OCI-LY7 (cell line): ENCODE measurements at regions of chr5 and their contacts with region 1.

Region 1: GRCh38 chr5:9507974-9508373 is 37.9 kb downstream of the SEMA5A start:
- DNase-seq: no peak
- H3K4me3 ChIP-seq: no peak overlapping the region
- H3K27ac ChIP-seq: no peak overlapping the region
- H3K4me1 ChIP-seq: no peaks in the 10 kb centered on the region
- CTCF ChIP-seq: no peak

Region 2: DNA sequence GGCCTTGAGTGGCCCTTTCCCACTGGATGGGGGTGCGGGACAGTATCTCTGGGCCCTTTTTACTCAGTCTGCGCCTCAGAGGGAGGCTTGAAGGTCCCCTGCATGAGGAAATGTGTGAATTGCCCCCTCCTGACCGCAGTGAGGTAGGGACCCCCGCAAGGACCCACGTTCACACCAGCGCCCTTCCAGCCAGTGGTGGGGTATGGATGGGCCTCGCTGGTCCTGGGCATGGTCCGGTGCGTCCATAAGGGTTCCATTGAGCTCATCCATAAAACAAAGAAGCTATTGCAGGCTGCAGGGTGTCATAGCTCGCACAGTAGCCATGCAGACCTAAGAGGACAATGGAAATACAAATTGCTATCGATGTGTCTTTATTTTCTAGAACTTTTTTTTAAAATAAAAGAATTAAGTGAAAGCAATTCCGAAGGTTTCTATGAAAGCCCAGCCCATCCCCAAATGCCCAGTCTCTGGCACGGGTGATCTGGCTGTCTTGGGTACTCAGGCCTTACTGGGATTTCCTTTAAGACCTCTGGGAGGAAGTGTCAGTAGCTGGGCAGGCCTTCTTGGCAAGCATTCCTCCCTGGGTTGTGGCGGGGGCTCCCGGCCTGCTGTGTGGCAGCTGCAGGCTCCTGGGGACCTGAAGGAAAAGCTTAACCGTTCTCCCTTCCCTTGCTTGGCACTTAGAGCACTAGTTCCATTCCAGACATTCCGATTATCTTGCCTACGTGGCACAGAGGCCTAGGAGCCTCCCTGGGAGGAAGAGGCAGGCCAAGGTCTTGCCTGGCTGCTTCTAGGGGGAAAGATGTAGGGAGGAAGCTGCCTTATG is 39.4 kb after region 1 on chr5:
- CTCF ChIA-PET with region 1: no interaction called
- POLR2A ChIA-PET with region 1: no interaction called
- intact Hi-C with region 1: no loop called
- DNase-seq: no peak
- H3K4me3 ChIP-seq: no peak overlapping the region
- H3K27ac ChIP-seq: no peak overlapping the region
- H3K4me1 ChIP-seq: no peaks in the 10 kb centered on the region
- CTCF ChIP-seq: no peak

Region 3: DNA sequence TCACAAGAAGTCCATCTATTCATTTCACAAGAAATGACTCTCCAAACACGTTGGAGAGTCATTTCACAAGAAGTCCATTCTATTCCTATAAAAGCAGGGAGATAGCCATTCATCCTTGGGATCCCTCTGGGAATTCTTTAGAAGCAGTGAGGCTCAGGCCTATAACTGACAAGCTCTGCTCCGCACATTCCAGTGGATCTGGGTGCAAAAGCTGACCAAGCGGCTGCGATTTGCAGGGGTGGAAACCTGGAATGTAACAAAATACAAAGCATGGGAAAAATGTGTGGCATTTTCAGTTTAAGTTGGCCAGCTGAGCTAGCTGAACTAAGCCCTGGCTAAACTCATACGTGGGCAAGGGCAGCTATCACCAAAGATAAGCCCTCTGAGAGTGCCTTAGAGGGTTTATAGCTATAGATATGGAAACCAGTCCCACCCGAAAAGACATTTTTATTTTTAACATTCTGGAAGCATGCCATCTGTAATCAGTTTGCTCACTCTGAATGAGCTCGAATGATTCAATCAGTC is 113.5 kb after region 1 on chr5:
- CTCF ChIA-PET with region 1: no interaction called
- POLR2A ChIA-PET with region 1: no interaction called
- intact Hi-C with region 1: no loop called
- DNase-seq: no peak
- H3K4me3 ChIP-seq: no peak overlapping the region
- H3K27ac ChIP-seq: no peak overlapping the region
- H3K4me1 ChIP-seq: no peaks in the 10 kb centered on the region
- CTCF ChIP-seq: no peak

Region 4: DNA sequence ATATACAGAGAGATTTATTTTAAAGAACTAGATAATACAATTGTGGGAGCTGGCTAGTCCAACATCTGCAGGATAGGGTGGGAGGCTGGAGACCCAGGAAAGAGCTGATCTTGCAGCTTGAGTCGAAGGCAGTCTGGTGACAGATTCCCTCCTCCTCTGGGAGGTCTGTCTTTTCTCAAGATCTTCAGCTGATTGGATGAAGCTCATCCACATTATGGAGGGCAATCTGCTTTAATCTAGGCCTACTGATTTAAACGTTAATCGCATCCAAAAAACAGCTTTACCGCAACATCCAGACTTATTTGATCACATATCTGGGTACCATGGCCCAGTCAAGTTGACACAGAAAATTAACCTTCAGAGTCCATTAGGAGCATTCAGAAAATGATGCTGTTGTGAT is 573.6 kb after region 1 on chr5:
- CTCF ChIA-PET with region 1: no interaction called
- POLR2A ChIA-PET with region 1: no interaction called
- intact Hi-C with region 1: loop called (anchors 5 kb)
- DNase-seq: no peak
- H3K4me3 ChIP-seq: no peak overlapping the region
- H3K27ac ChIP-seq: no peak overlapping the region
- H3K4me1 ChIP-seq: no peaks in the 10 kb centered on the region
- CTCF ChIP-seq: no peak